A549 (cell line): ENCODE measurements at regions of chr11 and their contacts with region 1.

Region 1: DNA sequence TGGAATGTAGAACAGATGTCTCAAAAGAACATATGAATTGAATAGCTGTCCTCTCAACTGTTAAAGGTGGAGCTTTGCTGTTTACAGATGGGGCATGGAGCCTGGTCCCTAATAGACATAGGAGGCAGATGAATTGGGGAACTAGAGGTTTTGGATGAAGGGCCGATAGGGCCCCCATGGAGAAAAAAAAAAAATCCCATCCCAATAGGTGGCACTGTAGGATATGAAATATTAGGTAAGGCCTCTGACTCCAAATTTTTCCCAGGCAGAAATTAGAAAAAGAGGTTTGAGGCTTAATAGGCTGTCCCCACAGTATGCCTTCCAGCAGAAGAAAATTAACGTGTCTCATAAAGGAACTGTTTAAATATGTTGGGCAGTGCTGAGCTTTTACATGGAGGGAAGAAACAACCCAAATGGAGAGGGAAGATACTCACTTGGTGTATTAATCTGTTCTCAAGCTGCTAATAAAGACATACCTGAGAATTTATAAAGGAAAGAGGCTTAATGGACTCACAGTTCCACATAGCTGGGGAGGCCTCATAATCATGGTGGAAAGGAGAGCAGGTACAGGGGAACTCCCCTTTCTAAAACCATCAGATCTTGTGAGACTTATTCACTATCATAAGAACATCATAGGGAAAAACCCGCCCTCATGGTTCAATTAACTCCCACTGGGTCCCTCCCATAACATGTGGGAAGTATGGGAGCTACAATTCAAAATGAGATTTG is 30.1 kb upstream of the TMEM45B start:
- DNase-seq: peak in 1 of 2 experiments; percentile 8
- ATAC-seq: peak; percentile 52 to 64; a peak in 2 of 6 replicates
- H3K4me3 ChIP-seq: no peak overlapping the region
- H3K27ac ChIP-seq: no peak overlapping the region
- H3K4me1 ChIP-seq: no peaks in the 10 kb centered on the region
- CTCF ChIP-seq: peak; percentile 55
- EP300 ChIP-seq: no peak
- POLR2A ChIP-seq: no peak
- RAD21 ChIP-seq: peak; percentile 67 to 69

Region 2: DNA sequence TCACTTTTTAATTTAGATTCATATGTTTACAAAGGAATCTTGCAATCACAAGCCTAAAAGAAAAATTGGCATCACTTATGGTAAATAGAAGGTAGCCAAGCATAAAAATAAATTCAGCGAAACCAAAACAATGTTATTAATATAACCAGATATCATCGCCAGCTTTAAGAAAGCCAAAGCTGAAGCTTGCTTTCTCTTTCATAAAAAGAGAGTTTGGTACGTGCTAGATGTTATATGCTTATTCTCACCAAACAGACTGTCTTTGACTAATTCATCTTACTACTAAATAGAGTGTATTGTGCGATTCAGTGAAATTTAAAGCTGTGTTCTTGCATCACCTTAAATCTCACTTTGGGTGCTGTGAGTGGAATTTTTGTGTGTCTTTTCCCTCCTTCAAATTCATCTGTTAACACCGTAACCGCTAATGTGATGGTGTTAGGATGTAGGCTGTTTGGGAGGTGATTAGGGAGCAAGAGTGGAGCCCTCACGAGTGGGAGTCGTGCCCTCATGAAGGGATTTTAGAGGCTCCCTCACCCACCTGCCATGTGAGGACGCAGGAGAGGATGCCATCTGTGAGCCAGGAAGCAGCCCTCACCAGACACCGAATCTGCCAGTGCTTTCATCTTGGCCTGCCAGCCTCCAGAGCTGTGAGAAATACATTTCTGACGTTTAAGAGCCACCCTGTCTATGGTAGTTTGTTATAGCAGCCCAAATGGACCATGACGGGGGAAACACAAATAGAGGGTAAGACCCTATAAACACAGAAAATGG is 104.0 kb before region 1 on chr11:
- CTCF ChIA-PET with region 1: no interaction called
- POLR2A ChIA-PET with region 1: no interaction called
- DNase-seq: no peak
- ATAC-seq: no peak
- H3K4me3 ChIP-seq: no peak overlapping the region
- H3K27ac ChIP-seq: no peak overlapping the region
- H3K4me1 ChIP-seq: no peaks in the 10 kb centered on the region
- CTCF ChIP-seq: no peak
- EP300 ChIP-seq: no peak
- POLR2A ChIP-seq: no peak
- RAD21 ChIP-seq: no peak

Region 3: GRCh38 chr11:129871914-129872313 is 86.4 kb after region 1 on chr11:
- CTCF ChIA-PET with region 1: interaction called, 17 read pairs
- POLR2A ChIA-PET with region 1: no interaction called
- DNase-seq: no peak
- ATAC-seq: no peak
- H3K4me3 ChIP-seq: no peak overlapping the region
- H3K27ac ChIP-seq: no peak overlapping the region
- H3K4me1 ChIP-seq: no peaks in the 10 kb centered on the region
- CTCF ChIP-seq: no peak
- EP300 ChIP-seq: no peak
- POLR2A ChIP-seq: no peak
- RAD21 ChIP-seq: no peak

Region 4: GRCh38 chr11:129881570-129882170 is 96.1 kb after region 1 on chr11:
- CTCF ChIA-PET with region 1: interaction called, 12 read pairs
- POLR2A ChIA-PET with region 1: no interaction called
- DNase-seq: peak; percentile 27 to 51
- ATAC-seq: peak; percentile 77 to 91; a peak in 5 of 6 replicates
- H3K4me3 ChIP-seq: no peak overlapping the region
- H3K27ac ChIP-seq: no peak overlapping the region
- H3K4me1 ChIP-seq: no peaks in the 10 kb centered on the region
- CTCF ChIP-seq: peak; percentile 38
- EP300 ChIP-seq: no peak
- POLR2A ChIP-seq: no peak
- RAD21 ChIP-seq: peak; percentile 38 to 58; a peak in 4 of 5 replicates

Region 5: DNA sequence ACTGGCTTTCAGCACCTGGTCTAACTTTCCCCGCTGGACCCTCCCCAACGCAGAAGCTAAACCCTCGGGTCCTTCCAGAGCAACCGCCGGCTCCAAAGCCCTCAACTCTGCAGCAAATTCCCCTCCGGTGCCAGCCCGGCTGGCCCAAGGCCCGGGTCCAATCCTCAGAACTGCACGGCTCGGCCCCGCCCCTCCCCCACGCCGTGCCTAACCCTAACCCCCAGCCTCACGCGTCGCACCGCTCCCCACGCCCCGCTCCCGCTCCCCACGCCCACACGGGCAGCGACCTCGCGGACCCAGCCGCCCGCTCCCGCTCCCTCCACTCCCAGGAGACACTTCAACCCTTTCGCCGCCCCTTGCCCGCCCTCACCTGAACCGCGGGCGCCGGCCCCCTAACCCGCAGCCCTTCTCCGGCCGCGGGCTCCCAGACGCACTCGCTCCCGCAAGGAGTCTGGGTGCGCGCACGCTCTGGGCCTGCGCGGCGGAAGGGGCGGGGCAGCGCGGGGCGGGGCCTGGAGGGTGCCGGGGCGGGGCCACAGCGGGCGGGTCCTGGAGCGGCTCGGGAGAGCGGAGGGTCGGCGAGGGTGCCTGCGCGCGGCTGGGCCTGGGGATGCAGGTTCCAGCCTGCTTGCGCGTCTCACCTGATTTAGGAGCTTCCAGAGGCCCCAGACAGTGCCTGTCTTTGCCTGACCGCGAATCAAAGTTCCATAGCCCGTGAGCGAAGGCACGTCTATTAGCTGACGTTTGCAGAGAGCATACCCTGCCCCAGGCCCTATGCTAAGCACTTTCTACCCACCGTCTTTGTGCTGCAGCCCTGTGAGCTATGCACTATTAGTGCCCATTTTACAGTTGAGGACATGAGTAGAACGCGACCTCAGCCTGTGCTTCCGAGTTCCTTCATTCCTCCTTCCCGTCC is 109.8 kb after region 1 on chr11 and contains the start of gene NFRKB:
- CTCF ChIA-PET with region 1: interaction called, 12 read pairs
- POLR2A ChIA-PET with region 1: no interaction called
- DNase-seq: peak; percentile 58 to 76
- ATAC-seq: peak; percentile 95 to 99
- H3K4me3 ChIP-seq: peak within 1 kb of the TSS; percentile 73
- H3K27ac ChIP-seq: peak within 1 kb of the TSS; percentile 83 to 100
- H3K4me1 ChIP-seq: peaks cover 11% of the 10 kb centered on the region; the same call in 1 of the 3 replicates
- CTCF ChIP-seq: no peak
- EP300 ChIP-seq: no peak
- POLR2A ChIP-seq: peak; percentile 70
- RAD21 ChIP-seq: no peak
- polyA plus RNA-seq, gene NFRKB: 10.2 and 11.8 TPM in 2 replicates

Region 6: GRCh38 chr11:130131961-130132850 is 346.7 kb after region 1 on chr11:
- CTCF ChIA-PET with region 1: interaction called, 13 read pairs
- POLR2A ChIA-PET with region 1: no interaction called
- DNase-seq: peak; percentile 61 to 71
- ATAC-seq: peak; percentile 73 to 87; a peak in 4 of 6 replicates
- H3K4me3 ChIP-seq: no peak overlapping the region
- H3K27ac ChIP-seq: no peak overlapping the region
- H3K4me1 ChIP-seq: no peaks in the 10 kb centered on the region
- CTCF ChIP-seq: peak; percentile 66
- EP300 ChIP-seq: no peak
- POLR2A ChIP-seq: no peak
- RAD21 ChIP-seq: peak; percentile 82 to 84